ENCODE measurements at regions of chr5 and their contacts with region 1.

Region 1: DNA sequence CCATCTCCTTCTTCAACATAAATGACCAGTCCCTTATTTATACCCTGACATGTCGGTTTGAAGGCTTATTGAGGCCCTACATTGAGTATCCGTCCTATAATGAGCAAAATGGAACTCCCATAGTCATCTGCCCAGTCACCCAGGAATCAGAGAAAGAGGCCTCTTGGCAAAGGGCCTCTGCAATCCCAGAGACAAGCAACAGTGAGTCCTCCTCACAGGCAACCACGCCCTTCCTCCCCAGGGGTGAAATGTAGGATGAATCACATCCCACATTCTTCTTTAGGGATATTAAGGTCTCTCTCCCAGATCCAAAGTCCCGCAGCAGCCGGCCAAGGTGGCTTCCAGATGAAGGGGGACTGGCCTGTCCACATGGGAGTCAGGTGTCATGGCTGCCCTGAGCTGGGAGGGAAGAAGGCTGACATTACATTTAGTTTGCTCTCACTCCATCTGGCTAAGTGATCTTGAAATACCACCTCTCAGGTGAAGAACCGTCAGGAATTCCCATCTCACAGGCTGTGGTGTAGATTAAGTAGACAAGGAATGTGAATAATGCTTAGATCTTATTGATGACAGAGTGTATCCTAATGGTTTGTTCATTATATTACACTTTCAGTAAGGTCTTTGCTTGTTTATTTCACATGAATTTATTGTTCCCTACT is 38.2 kb upstream of the BTNL3 start:
- DNase-seq: no peak

Region 2: GRCh38 chr5:180860887-180861822 is 89.3 kb before region 1 on chr5 and contains the start of gene ZFP62:
- intact Hi-C with region 1: no loop called
- DNase-seq: peak; percentile 76 to 98 (median 86)

Region 3: GRCh38 chr5:180915924-180916470 is 34.4 kb before region 1 on chr5:
- intact Hi-C with region 1: no loop called
- DNase-seq: no peak

Region 4: GRCh38 chr5:181005791-181006190 is 55.4 kb after region 1 on chr5:
- intact Hi-C with region 1: loop called (anchors 2 kb)
- DNase-seq: peak in 1 of 10 donors; percentile 39

Measured in posterior cingulate gyrus (tissue), 11 donors.